Activated CD8-positive, alpha-beta T cell treated with anti-CD3 and anti-CD28 coated beads for 36 hours (primary cell): ENCODE measurements at regions of chr2 and their contacts with region 1.

Region 1: GRCh38 chr2:59025157-59025757 is 784.1 kb upstream of the FANCL start:
- DNase-seq: peak; percentile 52
- ATAC-seq: no peak
- H3K4me3 Mint-ChIP-seq: no peak overlapping the region
- H3K27ac Mint-ChIP-seq: no peak overlapping the region
- H3K4me1 Mint-ChIP-seq: no peaks in the 10 kb centered on the region
- H3K27me3 Mint-ChIP-seq: peaks cover 1% of the 10 kb centered on the region
- CTCF ChIP-seq: peak; percentile 68

Region 2: DNA sequence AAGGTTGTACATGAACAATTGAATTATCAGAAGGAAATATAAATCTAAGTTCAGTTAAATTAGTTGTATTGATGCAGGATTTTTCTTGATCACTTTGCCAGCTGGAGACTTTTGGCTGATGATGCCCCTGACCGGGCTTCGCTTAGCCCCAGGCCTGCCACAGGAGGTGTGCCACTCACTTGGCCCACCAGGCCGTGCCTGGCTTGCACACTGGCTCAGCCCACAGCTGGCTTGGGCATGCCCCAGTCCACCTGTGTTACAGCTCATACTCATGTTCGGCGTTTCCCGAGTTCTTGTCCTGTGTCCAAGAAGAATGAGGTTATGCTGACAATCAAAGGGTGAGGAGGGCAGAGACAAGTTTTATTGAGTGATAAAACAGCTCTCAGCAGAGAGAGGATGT is 10.2 kb before region 1 on chr2:
- CTCF ChIA-PET with region 1: interaction called, 26 read pairs
- POLR2A ChIA-PET with region 1: no interaction called
- intact Hi-C with region 1: no loop called
- DNase-seq: no peak
- ATAC-seq: no peak
- H3K4me3 Mint-ChIP-seq: no peak overlapping the region
- H3K27ac Mint-ChIP-seq: no peak overlapping the region
- H3K4me1 Mint-ChIP-seq: no peaks in the 10 kb centered on the region
- H3K27me3 Mint-ChIP-seq: no peaks in the 10 kb centered on the region
- CTCF ChIP-seq: no peak